ENCODE measurements at regions of chr11 and their contacts with region 1.

Region 1: DNA sequence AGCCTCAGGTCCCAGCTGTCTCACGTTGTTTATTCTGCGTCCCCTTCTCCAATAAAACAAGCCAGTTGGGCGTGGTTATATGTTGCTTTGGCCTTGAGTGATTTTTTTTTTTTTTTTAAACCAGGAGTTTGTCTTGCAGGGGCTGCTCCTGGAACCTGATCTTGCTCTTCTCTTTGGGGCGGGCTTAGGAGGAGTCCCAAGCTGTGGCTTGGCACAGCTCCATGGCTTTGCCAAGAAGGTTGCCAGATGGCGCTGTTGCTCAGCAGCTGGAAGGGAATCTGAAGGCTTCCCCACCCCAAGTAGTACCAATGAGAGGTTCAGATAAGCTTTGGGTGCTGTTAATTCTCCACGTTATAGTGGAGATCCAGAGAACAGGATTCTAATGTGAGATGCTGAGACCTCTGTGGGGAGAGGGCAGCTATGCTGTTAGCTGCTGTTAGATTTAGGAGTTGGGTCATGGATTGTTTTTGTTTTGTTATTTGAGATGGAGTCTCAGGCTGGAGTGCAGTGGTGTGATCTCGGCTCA is 2.0 kb upstream of the FERMT3 start:
- DNase-seq: peak; percentile 72 to 94 (median 87)
- ATAC-seq: peak; percentile 51
- H3K4me3 ChIP-seq: no peak overlapping the region
- H3K4me3 Mint-ChIP-seq: peak overlapping the region; percentile 63
- H3K27ac ChIP-seq: peak overlapping the region in 1 of 2 experiments; percentile 25
- H3K27ac Mint-ChIP-seq: peak overlapping the region; percentile 75
- H3K4me1 ChIP-seq: peaks cover 29% of the 10 kb centered on the region
- H3K4me1 Mint-ChIP-seq: peaks cover 37% of the 10 kb centered on the region
- H3K27me3 ChIP-seq: no peaks in the 10 kb centered on the region
- H3K27me3 Mint-ChIP-seq: no peaks in the 10 kb centered on the region
- CTCF ChIP-seq: peak; percentile 71

Region 2: DNA sequence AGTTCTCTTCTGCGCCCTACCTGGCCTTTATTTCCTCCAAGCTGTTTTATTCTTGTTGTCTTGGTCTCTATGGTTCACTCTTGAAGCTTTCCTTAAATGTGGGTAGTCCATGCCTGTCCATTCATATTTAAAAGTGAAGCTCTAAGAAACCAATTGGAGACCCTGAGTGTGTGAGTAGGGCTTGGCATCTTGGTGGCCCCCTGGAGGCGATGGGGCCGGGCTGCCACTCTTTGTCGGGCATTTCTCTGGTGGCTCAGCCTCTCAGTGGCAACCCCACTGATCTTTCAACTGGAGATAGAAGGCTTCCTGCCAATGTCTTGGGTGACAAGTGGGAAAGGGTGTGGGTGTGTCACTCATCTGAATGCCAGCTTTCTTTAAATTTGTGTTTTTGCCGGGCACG is 12.4 kb after region 1 on chr11:
- CTCF ChIA-PET with region 1: interaction called, 263 read pairs
- POLR2A ChIA-PET with region 1: interaction called, 31 read pairs
- intact Hi-C with region 1: no loop called
- DNase-seq: no peak
- ATAC-seq: peak; percentile 63
- H3K4me3 ChIP-seq: no peak overlapping the region
- H3K4me3 Mint-ChIP-seq: no peak overlapping the region
- H3K27ac ChIP-seq: no peak overlapping the region
- H3K27ac Mint-ChIP-seq: peak overlapping the region; percentile 52
- H3K4me1 ChIP-seq: no peaks in the 10 kb centered on the region
- H3K4me1 Mint-ChIP-seq: peaks cover 15% of the 10 kb centered on the region
- H3K27me3 ChIP-seq: no peaks in the 10 kb centered on the region
- H3K27me3 Mint-ChIP-seq: no peaks in the 10 kb centered on the region
- CTCF ChIP-seq: no peak

Region 3: GRCh38 chr11:64233913-64234834 is 29.6 kb after region 1 on chr11 and contains the start of gene VEGFB:
- CTCF ChIA-PET with region 1: interaction called, 263 read pairs
- POLR2A ChIA-PET with region 1: interaction called, 96 read pairs
- intact Hi-C with region 1: loop called in 1 of 2 experiments (anchors 1 kb)
- DNase-seq: peak in 8 of 9 experiments; percentile 62 to 86 (median 72)
- ATAC-seq: peak; percentile 59
- H3K4me3 ChIP-seq: peak within 1 kb of the TSS; percentile 55 to 62
- H3K4me3 Mint-ChIP-seq: peak within 1 kb of the TSS; percentile 82
- H3K27ac ChIP-seq: peak within 1 kb of the TSS; percentile 33 to 68
- H3K27ac Mint-ChIP-seq: peak within 1 kb of the TSS; percentile 73
- H3K4me1 ChIP-seq: peaks cover 36% of the 10 kb centered on the region
- H3K4me1 Mint-ChIP-seq: peaks cover 38% of the 10 kb centered on the region
- H3K27me3 ChIP-seq: no peaks in the 10 kb centered on the region
- H3K27me3 Mint-ChIP-seq: no peaks in the 10 kb centered on the region
- CTCF ChIP-seq: no peak
- total RNA-seq, gene VEGFB: 33.6 to 40.0 TPM

Region 4: GRCh38 chr11:64246871-64247728 is 42.6 kb after region 1 on chr11 and contains the start of gene PPP1R14B:
- CTCF ChIA-PET with region 1: interaction called, 72 read pairs
- POLR2A ChIA-PET with region 1: interaction called, 96 read pairs
- intact Hi-C with region 1: loop called (anchors 1 kb)
- DNase-seq: peak; percentile 48 to 83 (median 81)
- ATAC-seq: peak; percentile 58
- H3K4me3 ChIP-seq: peak within 1 kb of the TSS; percentile 75 to 98
- H3K4me3 Mint-ChIP-seq: peak within 1 kb of the TSS; percentile 85
- H3K27ac ChIP-seq: peak within 1 kb of the TSS; percentile 35 to 42
- H3K27ac Mint-ChIP-seq: peak within 1 kb of the TSS; percentile 82
- H3K4me1 ChIP-seq: peaks cover 41% of the 10 kb centered on the region
- H3K4me1 Mint-ChIP-seq: peaks cover 44% of the 10 kb centered on the region
- H3K27me3 ChIP-seq: no peaks in the 10 kb centered on the region
- H3K27me3 Mint-ChIP-seq: no peaks in the 10 kb centered on the region
- CTCF ChIP-seq: no peak
- total RNA-seq, gene PPP1R14B: 25.7 to 30.8 TPM

Region 5: DNA sequence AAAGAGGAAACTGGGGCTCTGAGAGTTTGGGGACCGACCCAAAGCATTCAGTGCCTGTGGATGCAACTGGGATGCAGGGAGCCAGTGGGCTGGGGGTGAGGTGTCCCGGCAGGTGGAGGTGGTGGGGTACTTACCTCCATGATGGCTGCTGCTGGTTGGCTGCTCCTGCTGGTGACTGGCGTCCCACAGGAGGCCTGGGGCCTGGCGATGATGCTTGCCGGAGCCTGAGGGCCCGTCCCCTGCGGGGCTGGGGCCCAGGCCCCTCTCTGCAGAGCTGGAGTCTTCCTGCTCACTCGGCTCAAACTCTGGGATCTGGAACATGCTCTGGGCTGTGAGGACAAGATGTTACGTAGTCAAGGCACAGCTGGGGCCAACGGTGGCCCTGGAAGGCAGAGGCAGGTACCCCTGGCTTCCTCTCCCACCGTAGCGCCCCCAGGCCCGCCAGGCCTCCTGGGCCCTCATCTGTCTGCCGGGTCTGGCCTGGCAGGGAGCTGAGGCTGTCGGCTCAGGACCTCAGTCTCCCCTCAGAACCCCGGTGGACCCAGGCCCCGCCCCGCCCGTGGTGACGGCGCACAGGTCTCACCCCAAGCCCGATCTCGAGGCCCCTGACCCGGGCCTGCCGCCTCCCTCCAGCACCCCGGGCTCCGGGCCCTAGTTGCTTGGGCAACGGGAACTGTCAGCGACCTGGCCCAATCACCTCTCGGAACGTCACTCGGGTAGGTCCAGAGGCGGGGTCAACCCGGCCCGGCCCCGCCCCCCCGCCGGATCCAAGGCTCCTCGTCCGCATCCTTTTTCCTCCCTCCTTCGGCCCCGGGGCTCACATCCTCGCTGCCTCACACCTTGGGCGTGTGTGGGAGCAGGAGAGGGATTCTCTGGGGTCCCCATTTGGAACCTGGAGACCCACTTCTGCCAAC is 79.8 kb after region 1 on chr11 and contains the start of gene BAD:
- CTCF ChIA-PET with region 1: interaction called, 12 read pairs
- POLR2A ChIA-PET with region 1: interaction called, 4 read pairs
- intact Hi-C with region 1: no loop called
- DNase-seq: peak; percentile 85 to 95 (median 92)
- ATAC-seq: peak; percentile 77
- H3K4me3 ChIP-seq: peak within 1 kb of the TSS; percentile 73 to 77
- H3K4me3 Mint-ChIP-seq: peak within 1 kb of the TSS; percentile 88
- H3K27ac ChIP-seq: peak within 1 kb of the TSS; percentile 95 to 100
- H3K27ac Mint-ChIP-seq: peak within 1 kb of the TSS; percentile 97
- H3K4me1 ChIP-seq: peaks cover 18% of the 10 kb centered on the region
- H3K4me1 Mint-ChIP-seq: peaks cover 16% of the 10 kb centered on the region
- H3K27me3 ChIP-seq: no peaks in the 10 kb centered on the region
- H3K27me3 Mint-ChIP-seq: no peaks in the 10 kb centered on the region
- CTCF ChIP-seq: no peak
- total RNA-seq, gene BAD: 14.6 to 18.2 TPM

Region 6: GRCh38 chr11:64358907-64359711 is 154.6 kb after region 1 on chr11 and contains the start of gene RPS6KA4:
- CTCF ChIA-PET with region 1: interaction called, 4 read pairs
- POLR2A ChIA-PET with region 1: no interaction called
- intact Hi-C with region 1: loop called (anchors 1 to 2 kb)
- DNase-seq: peak in 7 of 9 experiments; percentile 17 to 76 (median 47)
- ATAC-seq: peak; percentile 77
- H3K4me3 ChIP-seq: peak within 1 kb of the TSS; percentile 76 to 87
- H3K4me3 Mint-ChIP-seq: peak within 1 kb of the TSS; percentile 88
- H3K27ac ChIP-seq: peak within 1 kb of the TSS; percentile 40 to 66
- H3K27ac Mint-ChIP-seq: peak within 1 kb of the TSS; percentile 70
- H3K4me1 ChIP-seq: peaks cover 30% of the 10 kb centered on the region
- H3K4me1 Mint-ChIP-seq: peaks cover 29% of the 10 kb centered on the region
- H3K27me3 ChIP-seq: no peaks in the 10 kb centered on the region
- H3K27me3 Mint-ChIP-seq: no peaks in the 10 kb centered on the region
- CTCF ChIP-seq: no peak
- total RNA-seq, gene RPS6KA4: 8.6 to 10.1 TPM

Region 7: GRCh38 chr11:64652586-64653387 is 448.3 kb after region 1 on chr11:
- CTCF ChIA-PET with region 1: no interaction called
- POLR2A ChIA-PET with region 1: no interaction called
- intact Hi-C with region 1: loop called in 1 of 2 experiments (anchors 2 kb)
- DNase-seq: peak; percentile 43 to 79 (median 71)
- ATAC-seq: peak; percentile 93
- H3K4me3 ChIP-seq: no peak overlapping the region
- H3K4me3 Mint-ChIP-seq: no peak overlapping the region
- H3K27ac ChIP-seq: no peak overlapping the region
- H3K27ac Mint-ChIP-seq: no peak overlapping the region
- H3K4me1 ChIP-seq: no peaks in the 10 kb centered on the region
- H3K4me1 Mint-ChIP-seq: no peaks in the 10 kb centered on the region
- H3K27me3 ChIP-seq: no peaks in the 10 kb centered on the region
- H3K27me3 Mint-ChIP-seq: peaks cover 9% of the 10 kb centered on the region
- CTCF ChIP-seq: peak; percentile 59